ENCODE measurements at regions of chr5 and their contacts with region 1.

Region 1: DNA sequence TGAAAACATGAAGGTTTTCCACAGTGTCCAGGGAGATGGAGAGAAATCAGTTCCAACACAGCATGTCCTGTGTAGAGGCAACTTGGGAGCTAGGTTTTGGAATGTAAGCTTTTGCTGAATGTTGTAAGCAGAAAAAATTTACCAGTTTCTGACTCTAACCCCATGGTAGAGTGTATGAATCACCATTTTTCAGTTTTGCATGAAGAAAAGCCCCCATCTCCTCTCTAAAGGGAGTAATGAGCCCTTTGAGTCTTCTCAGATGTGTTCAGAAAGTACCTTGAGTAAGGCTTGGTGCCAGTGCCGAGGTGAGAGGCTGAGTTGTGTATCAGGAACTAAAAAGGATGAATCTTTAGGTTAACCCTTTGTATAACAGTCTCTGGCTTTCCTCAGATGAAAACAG is 96.2 kb downstream of the ADRB2 start:
- DNase-seq: peak; percentile 28
- ATAC-seq: peak; percentile 73
- H3K4me3 ChIP-seq: no peak overlapping the region
- H3K27ac ChIP-seq: no peak overlapping the region
- H3K4me1 ChIP-seq: peaks cover 3% of the 10 kb centered on the region
- H3K27me3 ChIP-seq: no peaks in the 10 kb centered on the region
- CTCF ChIP-seq: no peak
- POLR2A ChIP-seq: no peak
- RAD21 ChIP-seq: no peak

Region 2: DNA sequence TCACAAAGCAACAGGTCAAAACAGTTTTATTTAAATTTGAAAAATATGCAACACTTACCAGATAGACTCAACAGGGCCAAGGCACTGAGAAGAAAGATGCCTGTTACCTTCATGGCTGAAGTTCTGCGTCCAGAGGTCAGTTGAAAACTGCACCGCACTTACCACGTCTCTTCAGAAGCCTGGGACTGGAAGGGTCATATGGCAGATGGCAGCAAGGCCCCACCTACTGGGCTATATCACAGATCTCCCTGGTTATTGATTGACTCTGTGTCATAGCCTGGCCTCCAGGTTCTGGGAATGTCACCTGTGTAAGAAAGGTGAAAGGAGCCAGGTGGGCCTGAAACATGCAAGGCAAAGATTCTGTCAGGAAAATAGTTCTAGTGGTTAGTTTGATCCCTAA is 1091.1 kb before region 1 on chr5 and contains the start of gene SPINK1:
- CTCF ChIA-PET with region 1: no interaction called
- POLR2A ChIA-PET with region 1: no interaction called
- dilution Hi-C with region 1: no loop called
- in situ Hi-C with region 1: no loop called
- intact Hi-C with region 1: no loop called
- DNase-seq: no peak
- ATAC-seq: no peak
- H3K4me3 ChIP-seq: no peak within 1 kb of the TSS
- H3K27ac ChIP-seq: no peak within 1 kb of the TSS
- H3K4me1 ChIP-seq: no peaks in the 10 kb centered on the region
- H3K27me3 ChIP-seq: peaks cover 2% of the 10 kb centered on the region; the same call in 1 of the 2 replicates
- CTCF ChIP-seq: no peak
- POLR2A ChIP-seq: no peak
- RAD21 ChIP-seq: no peak
- total RNA-seq, gene SPINK1: not detected in 2 replicates

Region 3: GRCh38 chr5:148849461-148849860 is 73.1 kb before region 1 on chr5:
- CTCF ChIA-PET with region 1: no interaction called
- POLR2A ChIA-PET with region 1: interaction called, 15 read pairs
- dilution Hi-C with region 1: no loop called
- in situ Hi-C with region 1: no loop called
- intact Hi-C with region 1: no loop called
- DNase-seq: no peak
- ATAC-seq: no peak
- H3K4me3 ChIP-seq: no peak overlapping the region
- H3K27ac ChIP-seq: no peak overlapping the region
- H3K4me1 ChIP-seq: peaks cover 4% of the 10 kb centered on the region
- H3K27me3 ChIP-seq: no peaks in the 10 kb centered on the region
- CTCF ChIP-seq: no peak
- POLR2A ChIP-seq: no peak
- RAD21 ChIP-seq: no peak